GM12878 (cell line): ENCODE measurements at regions of chr13 and their contacts with region 1.

Region 1: GRCh38 chr13:99228737-99229691 is 28.4 kb downstream of the UBAC2 start:
- DNase-seq: peak; percentile 91
- ATAC-seq: peak; percentile 90
- H3K4me3 ChIP-seq: peak overlapping the region; percentile 42; the same call in 1 of the 2 replicates
- H3K27ac ChIP-seq: peak overlapping the region; percentile 87
- H3K4me1 ChIP-seq: peaks cover 49% of the 10 kb centered on the region
- H3K27me3 ChIP-seq: no peaks in the 10 kb centered on the region
- CTCF ChIP-seq: no peak
- EP300 ChIP-seq: peak; percentile 93 to 96
- POLR2A ChIP-seq: no peak
- RAD21 ChIP-seq: 0 out of 2 replicates have a peak, but pooled peaks have one; percentile 23

Region 2: GRCh38 chr13:98910501-98910951 is 318.5 kb before region 1 on chr13:
- CTCF ChIA-PET with region 1: no interaction called
- POLR2A ChIA-PET with region 1: no interaction called
- RAD21 ChIA-PET with region 1: no interaction called
- SMC1A ChIA-PET with region 1: no interaction called
- in situ Hi-C with region 1: no loop called
- intact Hi-C with region 1: no loop called
- DNase-seq: no peak
- ATAC-seq: no peak
- H3K4me3 ChIP-seq: no peak overlapping the region
- H3K27ac ChIP-seq: no peak overlapping the region
- H3K4me1 ChIP-seq: no peaks in the 10 kb centered on the region
- H3K27me3 ChIP-seq: no peaks in the 10 kb centered on the region
- CTCF ChIP-seq: no peak
- EP300 ChIP-seq: no peak
- POLR2A ChIP-seq: no peak
- RAD21 ChIP-seq: no peak

Region 3: GRCh38 chr13:99218969-99219368 is 10.0 kb before region 1 on chr13:
- CTCF ChIA-PET with region 1: interaction called, 3 read pairs
- POLR2A ChIA-PET with region 1: interaction called, 6 read pairs
- RAD21 ChIA-PET with region 1: interaction called, 5 read pairs
- SMC1A ChIA-PET with region 1: interaction called, 12 read pairs
- in situ Hi-C with region 1: no loop called
- intact Hi-C with region 1: no loop called
- DNase-seq: peak; percentile 62
- ATAC-seq: peak; percentile 67
- H3K4me3 ChIP-seq: no peak overlapping the region
- H3K27ac ChIP-seq: no peak overlapping the region
- H3K4me1 ChIP-seq: peaks cover 10% of the 10 kb centered on the region
- H3K27me3 ChIP-seq: no peaks in the 10 kb centered on the region
- CTCF ChIP-seq: no peak
- EP300 ChIP-seq: no peak
- POLR2A ChIP-seq: no peak
- RAD21 ChIP-seq: no peak

Region 4: GRCh38 chr13:99258210-99258860 is 29.3 kb after region 1 on chr13 and contains the start of gene GPR18:
- CTCF ChIA-PET with region 1: interaction called, 10 read pairs
- POLR2A ChIA-PET with region 1: interaction called, 6 read pairs
- RAD21 ChIA-PET with region 1: interaction called, 37 read pairs
- SMC1A ChIA-PET with region 1: interaction called, 25 read pairs
- in situ Hi-C with region 1: no loop called
- intact Hi-C with region 1: loop called (anchors 2 kb)
- DNase-seq: peak; percentile 67
- ATAC-seq: peak; percentile 89
- H3K4me3 ChIP-seq: peak within 1 kb of the TSS; percentile 64
- H3K27ac ChIP-seq: peak within 1 kb of the TSS; percentile 38
- H3K4me1 ChIP-seq: peaks cover 21% of the 10 kb centered on the region
- H3K27me3 ChIP-seq: no peaks in the 10 kb centered on the region
- CTCF ChIP-seq: no peak
- EP300 ChIP-seq: peak in 1 of 2 experiments; percentile 58; a peak in 1 of 4 replicates
- POLR2A ChIP-seq: no peak
- RAD21 ChIP-seq: peak; percentile 22; the same call in 1 of the 2 replicates
- polyA plus RNA-seq, gene GPR18: 3.9 to 8.4 TPM

Region 5: DNA sequence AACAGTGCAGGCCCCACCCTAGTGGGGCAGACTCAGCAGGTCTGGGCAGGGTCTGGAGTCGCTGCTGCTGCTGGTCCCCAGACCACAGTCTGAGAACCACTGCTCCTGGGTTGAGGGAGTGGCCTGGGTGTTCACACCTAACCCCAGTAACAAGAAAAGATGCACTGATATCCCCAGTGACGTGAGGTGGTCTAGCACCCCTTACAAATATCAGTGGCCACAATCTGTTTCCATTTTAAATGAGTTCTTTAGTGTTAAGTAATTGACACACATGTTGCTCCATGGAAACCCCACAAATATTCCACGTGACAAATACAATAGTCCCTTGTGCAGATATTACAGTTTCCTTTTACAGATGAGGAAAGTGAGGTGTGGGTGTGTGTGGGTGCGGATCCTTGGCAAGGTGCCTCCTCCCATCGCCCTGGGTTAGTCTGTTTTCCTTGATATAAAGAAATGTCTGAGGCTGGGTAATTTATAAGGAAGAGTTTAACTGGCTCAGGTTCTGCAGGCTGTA is 174.5 kb after region 1 on chr13:
- CTCF ChIA-PET with region 1: no interaction called
- POLR2A ChIA-PET with region 1: no interaction called
- RAD21 ChIA-PET with region 1: no interaction called
- SMC1A ChIA-PET with region 1: no interaction called
- in situ Hi-C with region 1: no loop called
- intact Hi-C with region 1: no loop called
- DNase-seq: no peak
- ATAC-seq: no peak
- H3K4me3 ChIP-seq: no peak overlapping the region
- H3K27ac ChIP-seq: no peak overlapping the region
- H3K4me1 ChIP-seq: no peaks in the 10 kb centered on the region
- H3K27me3 ChIP-seq: no peaks in the 10 kb centered on the region
- CTCF ChIP-seq: no peak
- EP300 ChIP-seq: no peak
- POLR2A ChIP-seq: no peak
- RAD21 ChIP-seq: no peak